ENCODE measurements at regions of chr4 and their contacts with region 1.

Region 1: GRCh38 chr4:113547487-113548042 is 214.0 kb downstream of the CAMK2D start:
- DNase-seq: peak; percentile 79 to 94
- H3K4me3 ChIP-seq: peak overlapping the region in 1 of 2 donors; percentile 8
- H3K27ac ChIP-seq: peak overlapping the region; percentile 39 to 53
- H3K4me1 ChIP-seq: peaks cover 0 to 3% of the 10 kb centered on the region in 2 donors
- H3K27me3 ChIP-seq: no peaks in the 10 kb centered on the region
- CTCF ChIP-seq: peak; percentile 93 to 96 (median 95)

Region 2: GRCh38 chr4:113468165-113469022 is 79.2 kb before region 1 on chr4:
- intact Hi-C with region 1: loop called (anchors 5 kb)
- DNase-seq: peak; percentile 91 to 98
- H3K4me3 ChIP-seq: peak overlapping the region in 1 of 2 donors; percentile 43
- H3K27ac ChIP-seq: peak overlapping the region; percentile 91 to 92
- H3K4me1 ChIP-seq: peaks cover 8 to 20% of the 10 kb centered on the region in 2 donors
- H3K27me3 ChIP-seq: no peaks in the 10 kb centered on the region
- CTCF ChIP-seq: no peak

Region 3: DNA sequence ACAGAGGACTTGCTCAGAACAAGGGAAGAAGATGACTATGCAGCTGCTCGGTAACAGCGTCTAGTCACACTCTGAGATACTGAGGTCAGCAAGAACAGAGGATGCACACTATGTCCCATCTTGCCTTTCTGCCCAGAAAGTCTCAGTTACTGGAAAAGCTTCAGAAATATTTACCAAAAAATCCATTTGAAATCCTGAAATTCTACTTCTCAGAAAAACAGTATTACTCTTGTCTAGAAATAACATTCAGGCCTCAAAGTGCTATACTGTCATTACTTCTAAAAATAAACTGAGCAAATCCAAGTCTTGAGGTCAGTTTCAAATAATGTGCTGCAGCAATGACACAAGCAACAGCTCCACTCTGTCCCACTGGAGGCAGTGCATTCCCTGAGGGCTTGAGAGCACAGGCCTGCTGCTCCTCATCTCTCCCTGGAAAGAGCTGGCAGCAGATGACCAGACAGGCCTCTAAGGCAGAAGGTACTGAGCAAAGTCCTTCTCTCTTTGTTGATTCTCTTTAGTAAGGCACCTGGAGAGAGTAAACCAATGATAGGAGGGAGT is 137.0 kb after region 1 on chr4:
- intact Hi-C with region 1: loop called (anchors 5 kb)
- DNase-seq: peak; percentile 17 to 85
- H3K4me3 ChIP-seq: no peak overlapping the region
- H3K27ac ChIP-seq: peak overlapping the region; percentile 38 to 90
- H3K4me1 ChIP-seq: peaks cover 16 to 19% of the 10 kb centered on the region in 2 donors
- H3K27me3 ChIP-seq: no peaks in the 10 kb centered on the region
- CTCF ChIP-seq: peak; percentile 45 to 60 (median 55)

Measured in ascending aorta (tissue), 2 donors.